ENCODE measurements at regions of chr3 and their contacts with region 1.

Region 1: GRCh38 chr3:129106331-129106730 is 15.3 kb downstream of the RAB43 start:
- DNase-seq: no peak
- ATAC-seq: no peak
- H3K4me3 ChIP-seq: no peak overlapping the region
- H3K27ac ChIP-seq: no peak overlapping the region
- H3K4me1 ChIP-seq: no peaks in the 10 kb centered on the region
- H3K27me3 ChIP-seq: no peaks in the 10 kb centered on the region
- CTCF ChIP-seq: no peak

Region 2: DNA sequence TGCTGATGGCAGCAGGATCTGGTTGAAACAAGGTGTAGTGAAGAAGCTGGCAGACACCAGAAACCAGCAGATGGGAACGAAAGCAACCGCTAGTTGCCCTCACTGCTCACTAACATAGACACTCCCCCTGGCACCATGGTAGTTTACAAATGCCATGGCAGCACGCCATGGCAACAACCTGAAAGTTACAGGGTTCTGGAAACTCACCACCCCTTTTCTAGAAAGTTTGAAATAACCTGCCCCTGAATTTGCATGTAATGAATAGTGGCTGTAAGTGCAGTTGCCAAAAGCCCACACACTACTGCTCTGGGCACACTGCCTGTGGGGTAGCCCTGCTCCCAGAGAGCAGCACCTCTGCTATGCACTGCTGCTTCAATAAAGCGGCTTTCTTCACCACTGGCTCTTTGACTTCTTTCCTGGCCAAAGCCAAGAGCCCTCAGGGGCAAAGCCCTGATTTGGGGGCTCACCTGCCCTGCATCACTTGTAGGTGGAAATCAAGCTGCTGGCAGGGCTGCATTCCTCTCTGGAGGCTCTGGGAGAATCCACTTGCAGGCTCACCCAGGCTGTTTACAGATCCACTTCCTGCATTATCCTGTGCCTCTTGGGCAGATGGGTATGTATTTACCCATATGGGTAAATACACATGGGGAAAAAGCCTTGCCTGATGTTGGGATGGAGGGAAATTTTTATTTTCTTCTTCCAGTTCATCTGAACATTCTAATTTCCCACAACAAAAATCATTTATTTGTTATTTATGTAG is 47.7 kb before region 1 on chr3:
- intact Hi-C with region 1: loop called in 1 of 2 experiments (anchors 10 kb)
- DNase-seq: peak in 1 of 2 donors; percentile 8
- ATAC-seq: no peak
- H3K4me3 ChIP-seq: no peak overlapping the region
- H3K27ac ChIP-seq: no peak overlapping the region
- H3K4me1 ChIP-seq: no peaks in the 10 kb centered on the region
- H3K27me3 ChIP-seq: no peaks in the 10 kb centered on the region
- CTCF ChIP-seq: no peak

Region 3: GRCh38 chr3:129077222-129077621 is 29.1 kb before region 1 on chr3:
- intact Hi-C with region 1: no loop called
- DNase-seq: no peak
- ATAC-seq: no peak
- H3K4me3 ChIP-seq: no peak overlapping the region
- H3K27ac ChIP-seq: no peak overlapping the region
- H3K4me1 ChIP-seq: no peaks in the 10 kb centered on the region
- H3K27me3 ChIP-seq: no peaks in the 10 kb centered on the region
- CTCF ChIP-seq: no peak